IMR-90 (cell line): ENCODE measurements at regions of chr2 and their contacts with region 1.

Region 1: DNA sequence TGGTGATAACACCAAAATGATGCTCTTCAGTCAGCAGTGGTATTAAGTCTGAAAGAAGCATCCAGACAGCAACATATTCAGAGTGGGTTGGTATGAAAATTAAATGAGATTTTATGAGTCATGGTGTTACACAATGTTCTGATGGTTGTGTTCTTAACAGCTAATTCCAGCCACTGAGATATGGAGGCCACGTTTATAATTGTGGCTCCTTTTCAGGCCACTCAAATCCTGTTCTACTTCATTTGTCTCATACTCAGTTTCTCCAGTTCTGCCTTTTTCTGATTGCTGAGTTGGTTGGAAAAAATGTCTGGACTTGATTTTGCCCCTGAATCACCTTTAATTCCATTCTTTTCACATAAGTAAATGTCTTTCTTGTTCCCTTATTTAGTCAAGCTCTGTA is 162.7 kb upstream of the COL3A1 start:
- DNase-seq: peak; percentile 81
- ATAC-seq: peak; percentile 74
- H3K4me3 ChIP-seq: no peak overlapping the region
- H3K27ac ChIP-seq: no peak overlapping the region
- H3K4me1 ChIP-seq: peaks cover 5% of the 10 kb centered on the region; the same call in 1 of the 2 replicates
- H3K27me3 ChIP-seq: no peaks in the 10 kb centered on the region
- CTCF ChIP-seq: no peak
- POLR2A ChIP-seq: no peak
- RAD21 ChIP-seq: no peak

Region 2: GRCh38 chr2:188678882-188679281 is 132.6 kb before region 1 on chr2:
- CTCF ChIA-PET with region 1: no interaction called
- POLR2A ChIA-PET with region 1: no interaction called
- dilution Hi-C with region 1: no loop called
- in situ Hi-C with region 1: no loop called
- intact Hi-C with region 1: no loop called
- DNase-seq: peak; percentile 76
- ATAC-seq: peak; percentile 48; the same call in 1 of the 2 replicates
- H3K4me3 ChIP-seq: no peak overlapping the region
- H3K27ac ChIP-seq: no peak overlapping the region
- H3K4me1 ChIP-seq: no peaks in the 10 kb centered on the region
- H3K27me3 ChIP-seq: no peaks in the 10 kb centered on the region
- CTCF ChIP-seq: no peak
- POLR2A ChIP-seq: no peak
- RAD21 ChIP-seq: no peak

Region 3: DNA sequence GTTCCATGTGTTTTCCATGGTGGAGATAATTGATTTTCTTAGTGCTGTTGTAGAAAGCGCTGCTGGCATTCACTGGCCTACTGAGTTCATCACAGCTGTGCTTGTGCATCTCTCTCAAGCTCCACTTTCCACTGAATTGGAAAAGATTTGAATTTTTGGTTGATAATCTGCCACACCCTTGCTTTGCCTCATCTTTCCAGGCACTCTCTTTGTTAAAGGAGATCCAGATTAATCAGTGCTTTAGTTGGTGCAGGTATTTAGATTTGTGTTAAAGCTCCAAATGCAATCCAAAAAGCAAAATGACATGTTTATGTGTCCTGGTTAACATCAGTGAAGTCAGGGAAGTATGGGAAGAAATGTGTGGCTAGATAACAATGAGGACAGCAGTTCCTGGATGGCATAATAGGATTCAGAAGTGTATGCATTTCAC is 159.9 kb after region 1 on chr2:
- CTCF ChIA-PET with region 1: no interaction called
- POLR2A ChIA-PET with region 1: no interaction called
- dilution Hi-C with region 1: no loop called
- in situ Hi-C with region 1: no loop called
- intact Hi-C with region 1: loop called (anchors 2 kb)
- DNase-seq: no peak
- ATAC-seq: no peak
- H3K4me3 ChIP-seq: no peak overlapping the region
- H3K27ac ChIP-seq: peak overlapping the region; percentile 26; the same call in 1 of the 2 replicates
- H3K4me1 ChIP-seq: peaks cover 7% of the 10 kb centered on the region
- H3K27me3 ChIP-seq: no peaks in the 10 kb centered on the region
- CTCF ChIP-seq: no peak
- POLR2A ChIP-seq: no peak
- RAD21 ChIP-seq: no peak